ENCODE measurements at regions of chr3 and their contacts with region 1.

Region 1: GRCh38 chr3:11155341-11156025 is 1.2 kb downstream of the HRH1 start:
- DNase-seq: no peak
- H3K4me3 ChIP-seq: peak overlapping the region; percentile 57 to 79 (median 64)
- H3K27ac ChIP-seq: peak overlapping the region; percentile 61 to 72 (median 70)
- H3K4me1 ChIP-seq: peaks cover 7 to 49% (median 44%) of the 10 kb centered on the region in 4 donors
- H3K27me3 ChIP-seq: peaks cover 0 to 21% (median 0%) of the 10 kb centered on the region in 4 donors
- CTCF ChIP-seq: peak; percentile 56 to 78 (median 69)
- EP300 ChIP-seq: no peak
- POLR2A ChIP-seq: no peak

Region 2: GRCh38 chr3:11091088-11091590 is 64.3 kb before region 1 on chr3:
- intact Hi-C with region 1: loop called (anchors 5 kb)
- DNase-seq: no peak
- H3K4me3 ChIP-seq: no peak overlapping the region
- H3K27ac ChIP-seq: peak overlapping the region; percentile 10 to 65 (median 37)
- H3K4me1 ChIP-seq: peaks cover 3 to 33% (median 30%) of the 10 kb centered on the region in 4 donors
- H3K27me3 ChIP-seq: no peaks in the 10 kb centered on the region
- CTCF ChIP-seq: no peak
- EP300 ChIP-seq: peak; percentile 4
- POLR2A ChIP-seq: no peak

Region 3: DNA sequence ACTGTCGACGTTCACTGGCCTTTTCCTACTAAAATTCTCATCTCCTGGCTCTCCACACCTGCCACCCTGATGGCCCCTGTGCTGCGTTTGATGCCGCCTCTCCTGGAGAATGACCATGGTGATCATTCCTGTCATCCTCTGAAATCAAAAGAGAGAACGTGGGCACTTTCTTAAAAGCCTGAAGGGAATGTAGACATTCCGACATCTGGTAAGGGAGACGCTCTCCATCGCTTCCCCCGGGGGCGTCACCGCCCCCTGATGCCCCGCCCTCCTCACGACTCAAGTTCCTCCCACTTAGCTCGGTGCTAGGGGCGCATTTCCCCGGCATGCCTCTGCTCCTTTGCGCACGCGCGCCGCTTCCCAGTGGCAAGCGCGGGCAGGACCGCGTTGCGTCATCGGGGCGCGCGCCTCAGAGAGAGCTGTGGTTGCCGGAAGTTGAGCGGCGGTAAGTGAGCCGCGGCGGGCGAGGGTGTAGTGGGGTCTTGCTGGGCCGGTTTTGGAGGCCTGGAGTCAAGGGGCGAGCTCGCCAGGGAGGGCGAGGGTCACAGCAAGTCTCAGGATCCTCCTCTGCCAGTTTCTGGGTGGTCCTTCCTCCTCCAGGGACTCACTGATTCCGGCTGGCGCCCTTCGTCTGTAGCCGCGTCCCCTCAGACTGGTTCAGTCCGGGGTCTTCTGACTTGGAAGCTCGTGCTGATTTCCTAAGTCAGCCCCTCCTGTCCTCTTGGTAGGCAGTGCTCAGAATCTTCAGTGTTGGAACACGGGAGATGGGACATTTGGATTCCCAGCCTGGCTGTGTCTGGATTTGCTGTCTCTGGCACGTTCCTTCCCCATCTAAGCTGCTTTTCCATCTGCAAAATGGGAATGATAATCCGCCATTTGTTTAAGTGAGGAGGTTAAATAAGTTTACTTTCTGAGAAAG is 116.8 kb after region 1 on chr3 and contains the start of gene ATG7:
- intact Hi-C with region 1: loop called (anchors 5 kb)
- DNase-seq: peak; percentile 99
- H3K4me3 ChIP-seq: peak within 1 kb of the TSS; percentile 66 to 92 (median 84)
- H3K27ac ChIP-seq: peak within 1 kb of the TSS; percentile 78 to 84 (median 82)
- H3K4me1 ChIP-seq: peaks cover 17 to 24% (median 24%) of the 10 kb centered on the region in 4 donors
- H3K27me3 ChIP-seq: no peaks in the 10 kb centered on the region
- CTCF ChIP-seq: peak in 2 of 3 experiments; percentile 13 to 33
- EP300 ChIP-seq: no peak
- POLR2A ChIP-seq: peak; percentile 81
- total RNA-seq, gene ATG7: 20.6 to 50.4 (median 39.9) TPM

Region 4: DNA sequence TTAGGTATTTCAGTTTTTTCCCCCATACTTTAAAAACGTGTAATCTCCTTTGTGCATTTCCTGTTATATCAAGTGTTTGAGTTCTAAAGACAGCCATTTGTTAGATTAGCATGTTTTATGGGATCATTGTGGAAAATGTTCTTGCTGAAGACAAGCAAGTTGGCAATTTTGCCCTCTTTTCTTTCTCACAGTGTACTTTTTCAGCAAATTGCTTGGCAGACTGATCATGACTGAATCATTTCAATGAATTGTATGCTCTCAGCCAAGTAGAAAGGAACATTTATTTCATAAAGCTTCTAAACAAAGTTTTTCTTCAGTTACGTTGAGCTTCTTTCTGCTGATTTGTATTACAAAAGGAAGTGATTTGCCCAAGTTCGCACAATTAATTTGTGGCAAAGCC is 168.3 kb after region 1 on chr3:
- intact Hi-C with region 1: loop called (anchors 5 kb)
- DNase-seq: no peak
- H3K4me3 ChIP-seq: no peak overlapping the region
- H3K27ac ChIP-seq: peak overlapping the region; percentile 11 to 54 (median 33)
- H3K4me1 ChIP-seq: peaks cover 0 to 18% (median 8%) of the 10 kb centered on the region in 4 donors
- H3K27me3 ChIP-seq: no peaks in the 10 kb centered on the region
- CTCF ChIP-seq: no peak
- EP300 ChIP-seq: no peak
- POLR2A ChIP-seq: no peak